GM12878 (cell line): ENCODE measurements at regions of chr17 and their contacts with region 1.

Region 1: DNA sequence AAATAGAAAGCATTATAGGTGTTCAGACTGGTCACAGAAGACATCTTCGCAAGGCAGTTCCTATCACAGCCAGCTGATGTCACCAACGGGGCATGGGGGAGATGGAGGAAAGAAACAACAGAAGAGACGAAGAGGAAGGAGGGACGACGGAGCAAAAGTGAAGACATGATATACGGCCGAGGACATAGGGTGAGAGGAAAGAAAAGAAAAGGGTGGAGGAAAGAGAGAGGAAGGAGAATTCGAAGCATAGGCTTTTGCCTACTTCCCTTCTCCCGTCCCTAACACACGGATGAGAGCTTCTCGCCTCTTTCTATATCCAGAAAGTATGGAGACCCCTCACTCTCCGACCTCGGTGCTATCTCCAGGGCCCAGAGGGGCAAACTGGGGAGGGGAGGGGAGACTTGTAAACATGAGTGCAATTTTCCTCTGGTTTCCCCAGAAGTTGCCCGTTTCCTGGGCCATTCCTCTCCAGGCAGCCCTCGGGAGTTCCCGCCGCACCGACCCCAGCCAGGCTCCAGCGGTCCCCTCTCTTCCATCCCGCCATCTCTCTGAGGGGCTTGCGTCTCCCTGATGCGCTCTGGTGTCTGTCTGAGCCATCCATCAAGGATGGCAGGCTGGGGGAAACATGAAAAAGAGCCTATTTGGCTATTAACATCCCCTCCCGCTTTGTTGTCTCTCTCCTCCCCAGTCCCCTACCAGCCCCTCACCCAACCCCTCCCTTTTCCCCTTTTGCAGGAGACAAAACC is 26.0 kb downstream of the COPZ2 start:
- DNase-seq: no peak
- ATAC-seq: peak; percentile 92
- H3K4me3 ChIP-seq: peak overlapping the region; percentile 75
- H3K27ac ChIP-seq: no peak overlapping the region
- H3K4me1 ChIP-seq: peaks cover 7% of the 10 kb centered on the region
- H3K27me3 ChIP-seq: no peaks in the 10 kb centered on the region
- CTCF ChIP-seq: peak; percentile 61 to 76 (median 72)
- EP300 ChIP-seq: no peak
- POLR2A ChIP-seq: no peak
- RAD21 ChIP-seq: peak; percentile 52; the same call in 1 of the 2 replicates

Region 2: DNA sequence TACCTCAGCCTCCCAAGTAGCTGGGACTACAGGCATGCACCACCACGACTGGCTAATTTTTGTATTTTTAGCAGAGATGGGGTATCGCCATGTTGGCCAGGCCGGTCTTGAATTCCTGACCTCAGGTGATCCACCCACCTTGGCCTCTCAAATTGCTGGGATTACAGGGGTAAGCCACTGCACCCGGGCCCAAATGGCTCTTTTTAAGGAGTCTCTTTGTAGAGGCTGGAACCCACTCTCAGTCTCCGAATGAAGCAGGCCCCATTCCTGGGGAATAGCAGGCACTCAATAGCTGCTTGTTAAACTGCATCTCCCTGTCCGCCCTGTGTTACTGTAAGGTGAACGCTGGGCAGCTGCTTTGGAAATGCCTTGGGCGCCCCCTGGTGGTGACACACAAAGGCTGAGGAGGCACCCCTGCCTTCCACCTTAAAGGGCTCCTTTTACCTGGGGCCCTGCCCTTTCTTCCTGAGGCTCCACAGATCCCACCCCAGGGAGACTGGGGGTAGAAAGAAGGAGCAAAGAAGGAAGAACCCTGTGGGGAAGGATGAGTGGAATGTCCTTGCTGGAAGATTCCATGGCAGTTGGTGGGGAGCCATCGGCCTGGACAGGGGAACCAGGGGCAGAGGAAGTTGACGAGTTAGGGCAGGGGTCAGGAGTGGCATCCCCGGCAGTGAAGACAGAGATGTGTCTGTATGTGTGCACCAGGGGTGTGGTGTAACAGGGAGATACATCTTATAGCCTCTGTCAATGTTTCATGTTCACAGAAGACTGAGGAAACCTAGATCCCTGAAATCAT is 121.6 kb before region 1 on chr17:
- CTCF ChIA-PET with region 1: interaction called, 3 read pairs
- POLR2A ChIA-PET with region 1: interaction called, 3 read pairs
- RAD21 ChIA-PET with region 1: no interaction called
- SMC1A ChIA-PET with region 1: interaction called, 26 read pairs
- in situ Hi-C with region 1: no loop called
- intact Hi-C with region 1: no loop called
- DNase-seq: no peak
- ATAC-seq: peak; percentile 99
- H3K4me3 ChIP-seq: no peak overlapping the region
- H3K27ac ChIP-seq: no peak overlapping the region
- H3K4me1 ChIP-seq: peaks cover 12% of the 10 kb centered on the region
- H3K27me3 ChIP-seq: no peaks in the 10 kb centered on the region
- CTCF ChIP-seq: peak; percentile 91 to 97 (median 96)
- EP300 ChIP-seq: no peak
- POLR2A ChIP-seq: no peak
- RAD21 ChIP-seq: peak; percentile 96

Region 3: GRCh38 chr17:47941236-47941994 is 70.2 kb before region 1 on chr17 and contains the start of gene PNPO:
- CTCF ChIA-PET with region 1: interaction called, 419 read pairs
- POLR2A ChIA-PET with region 1: interaction called, 4 read pairs
- RAD21 ChIA-PET with region 1: interaction called, 126 read pairs
- SMC1A ChIA-PET with region 1: interaction called, 158 read pairs
- in situ Hi-C with region 1: no loop called
- intact Hi-C with region 1: no loop called
- DNase-seq: peak; percentile 97
- ATAC-seq: peak; percentile 95
- H3K4me3 ChIP-seq: peak within 1 kb of the TSS; percentile 91
- H3K27ac ChIP-seq: peak within 1 kb of the TSS; percentile 86
- H3K4me1 ChIP-seq: peaks cover 48% of the 10 kb centered on the region
- H3K27me3 ChIP-seq: no peaks in the 10 kb centered on the region
- CTCF ChIP-seq: no peak
- EP300 ChIP-seq: 0 out of 4 replicates have a peak, but pooled peaks of 1 of the 2 experiments have one; percentile 12
- POLR2A ChIP-seq: peak; percentile 79
- RAD21 ChIP-seq: no peak
- polyA plus RNA-seq, gene PNPO: 13.9 to 32.3 TPM

Region 4: DNA sequence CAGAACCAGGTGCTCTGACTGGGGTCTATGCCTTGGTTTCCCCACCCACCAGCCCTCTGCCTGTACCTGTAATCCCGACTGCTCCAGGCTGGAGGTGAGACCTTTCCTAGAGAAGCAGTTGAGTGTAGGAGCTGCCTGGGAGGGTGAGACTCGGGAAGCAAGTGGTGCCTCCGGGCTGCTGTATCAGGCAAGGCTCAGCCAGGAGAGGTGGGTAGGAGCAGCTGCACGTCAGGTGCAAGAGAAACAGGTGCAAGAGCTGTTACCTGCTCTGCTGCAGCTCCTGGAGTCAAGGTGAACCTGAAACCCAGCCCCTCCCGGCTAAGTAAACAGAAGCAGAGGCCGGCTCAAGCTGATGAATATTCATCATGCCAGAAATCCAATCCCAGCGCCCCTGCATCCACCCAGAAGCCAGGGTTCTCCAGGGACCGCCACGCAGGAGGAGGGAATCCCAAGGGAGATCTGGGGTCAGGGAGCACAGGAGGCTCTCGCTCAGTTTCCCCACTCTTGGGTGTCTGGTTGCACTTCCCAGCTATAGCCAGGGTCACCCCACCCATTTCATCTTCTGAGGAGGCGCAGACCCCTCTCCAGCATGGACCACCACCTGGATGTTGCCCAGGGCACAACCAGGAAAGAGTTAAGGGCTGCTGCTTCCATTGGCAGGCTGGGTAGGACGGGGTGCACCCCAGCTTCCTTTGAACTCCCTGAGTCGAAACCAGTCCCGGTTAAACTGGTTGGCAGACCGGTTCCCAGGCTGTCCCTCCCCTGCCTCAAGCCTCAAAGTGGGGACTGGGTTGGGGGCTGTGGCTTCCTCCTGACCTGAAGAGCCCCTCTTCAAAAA is 53.8 kb before region 1 on chr17 and contains the start of gene PRR15L:
- CTCF ChIA-PET with region 1: interaction called, 419 read pairs
- POLR2A ChIA-PET with region 1: no interaction called
- RAD21 ChIA-PET with region 1: interaction called, 3 read pairs
- SMC1A ChIA-PET with region 1: interaction called, 158 read pairs
- in situ Hi-C with region 1: no loop called
- intact Hi-C with region 1: no loop called
- DNase-seq: no peak
- ATAC-seq: no peak
- H3K4me3 ChIP-seq: no peak within 1 kb of the TSS
- H3K27ac ChIP-seq: no peak within 1 kb of the TSS
- H3K4me1 ChIP-seq: no peaks in the 10 kb centered on the region
- H3K27me3 ChIP-seq: no peaks in the 10 kb centered on the region
- CTCF ChIP-seq: no peak
- EP300 ChIP-seq: no peak
- POLR2A ChIP-seq: no peak
- RAD21 ChIP-seq: no peak
- polyA plus RNA-seq, gene PRR15L: not detected

Region 5: DNA sequence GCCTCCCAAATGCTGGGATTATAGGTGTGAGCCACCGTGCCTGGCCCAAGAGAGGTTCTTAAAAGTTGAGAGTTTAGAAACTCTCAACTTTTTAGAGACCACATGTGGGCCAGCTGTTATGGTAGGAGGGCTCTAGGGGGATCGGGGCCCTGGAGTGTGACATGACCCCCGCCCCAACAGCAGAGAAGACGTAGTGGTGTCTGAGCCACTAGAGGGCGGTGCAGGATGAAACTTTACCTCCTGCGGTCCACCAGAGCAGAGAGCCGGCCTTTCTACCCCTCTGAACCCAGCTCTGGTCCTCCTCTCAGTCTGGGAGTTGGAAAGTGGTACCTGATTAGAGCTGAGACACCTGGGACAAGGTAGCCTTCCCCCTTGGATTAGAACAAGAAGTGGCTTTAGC is 33.3 kb before region 1 on chr17:
- CTCF ChIA-PET with region 1: interaction called, 454 read pairs
- POLR2A ChIA-PET with region 1: interaction called, 6 read pairs
- RAD21 ChIA-PET with region 1: interaction called, 107 read pairs
- SMC1A ChIA-PET with region 1: interaction called, 332 read pairs
- in situ Hi-C with region 1: loop called (anchors 5 kb)
- intact Hi-C with region 1: no loop called
- DNase-seq: no peak
- ATAC-seq: peak; percentile 98
- H3K4me3 ChIP-seq: no peak overlapping the region
- H3K27ac ChIP-seq: no peak overlapping the region
- H3K4me1 ChIP-seq: no peaks in the 10 kb centered on the region; the same call in 1 of the 2 replicates
- H3K27me3 ChIP-seq: no peaks in the 10 kb centered on the region
- CTCF ChIP-seq: peak; percentile 73 to 86 (median 77)
- EP300 ChIP-seq: no peak
- POLR2A ChIP-seq: no peak
- RAD21 ChIP-seq: peak; percentile 86

Region 6: GRCh38 chr17:48064638-48065037 is 53.1 kb after region 1 on chr17:
- CTCF ChIA-PET with region 1: no interaction called
- POLR2A ChIA-PET with region 1: no interaction called
- RAD21 ChIA-PET with region 1: no interaction called
- SMC1A ChIA-PET with region 1: no interaction called
- in situ Hi-C with region 1: no loop called
- intact Hi-C with region 1: no loop called
- DNase-seq: no peak
- ATAC-seq: no peak
- H3K4me3 ChIP-seq: no peak overlapping the region
- H3K27ac ChIP-seq: no peak overlapping the region
- H3K4me1 ChIP-seq: no peaks in the 10 kb centered on the region
- H3K27me3 ChIP-seq: no peaks in the 10 kb centered on the region
- CTCF ChIP-seq: no peak
- EP300 ChIP-seq: no peak
- POLR2A ChIP-seq: no peak
- RAD21 ChIP-seq: no peak